ENCODE measurements at regions of chr22 and their contacts with region 1.

Region 1: GRCh38 chr22:43346521-43346929 is 3.4 kb upstream of the SCUBE1 start:
- DNase-seq: peak; percentile 37 to 65
- ATAC-seq: peak; percentile 59 to 87; a peak in 4 of 6 replicates
- H3K4me3 ChIP-seq: no peak overlapping the region
- H3K27ac ChIP-seq: no peak overlapping the region
- H3K4me1 ChIP-seq: peaks cover 11% of the 10 kb centered on the region
- CTCF ChIP-seq: peak; percentile 48
- EP300 ChIP-seq: no peak
- POLR2A ChIP-seq: no peak
- RAD21 ChIP-seq: peak; percentile 51 to 65; a peak in 4 of 5 replicates

Region 2: GRCh38 chr22:43230971-43231723 is 115.4 kb before region 1 on chr22:
- CTCF ChIA-PET with region 1: interaction called, 12 read pairs
- POLR2A ChIA-PET with region 1: no interaction called
- DNase-seq: peak; percentile 45 to 60
- ATAC-seq: peak; percentile 52 to 77; a peak in 3 of 6 replicates
- H3K4me3 ChIP-seq: no peak overlapping the region
- H3K27ac ChIP-seq: no peak overlapping the region
- H3K4me1 ChIP-seq: no peaks in the 10 kb centered on the region
- CTCF ChIP-seq: peak; percentile 69
- EP300 ChIP-seq: no peak
- POLR2A ChIP-seq: no peak
- RAD21 ChIP-seq: peak; percentile 72 to 87

Region 3: DNA sequence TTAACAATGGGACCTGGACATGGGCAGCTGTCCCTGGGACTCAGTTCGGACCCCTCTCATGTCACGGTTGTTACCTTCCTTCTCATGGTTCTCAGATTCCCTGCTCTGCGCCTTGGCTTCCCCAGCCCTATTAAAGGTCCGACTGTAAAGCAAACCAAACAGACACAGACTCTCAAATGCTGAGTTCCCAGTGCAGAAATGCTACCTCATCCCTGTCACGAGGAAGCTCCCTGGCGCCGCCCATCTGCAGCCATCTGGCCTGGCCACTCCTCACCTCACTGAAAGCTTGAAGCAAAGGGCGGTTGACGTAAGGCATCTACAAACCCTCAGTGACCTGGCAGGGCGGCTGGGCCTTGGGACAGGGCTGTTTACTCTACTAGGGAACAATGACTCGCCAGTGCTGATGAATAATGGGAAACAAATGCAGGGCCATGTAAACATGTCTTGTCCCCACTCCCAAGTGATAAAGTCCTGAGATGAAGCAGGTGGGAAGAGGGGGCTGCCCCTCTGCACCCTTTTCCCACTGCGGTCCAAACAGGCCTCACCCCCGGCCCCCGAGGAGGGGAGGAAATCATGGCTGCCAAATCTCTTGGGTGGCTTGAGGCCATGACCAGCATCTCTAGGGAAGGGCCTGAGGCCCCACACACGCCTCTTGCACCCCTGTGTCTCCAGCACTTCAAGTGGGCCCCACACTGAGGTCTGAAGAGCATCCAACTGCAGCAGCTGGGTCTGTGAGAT is 52.7 kb before region 1 on chr22:
- CTCF ChIA-PET with region 1: interaction called, 13 read pairs
- POLR2A ChIA-PET with region 1: no interaction called
- DNase-seq: peak; percentile 32 to 73
- ATAC-seq: peak; percentile 48 to 82; a peak in 5 of 6 replicates
- H3K4me3 ChIP-seq: no peak overlapping the region
- H3K27ac ChIP-seq: peak overlapping the region; percentile 45 to 52; a peak in 4 of 6 replicates
- H3K4me1 ChIP-seq: peaks cover 15% of the 10 kb centered on the region
- CTCF ChIP-seq: no peak
- EP300 ChIP-seq: no peak
- POLR2A ChIP-seq: no peak
- RAD21 ChIP-seq: no peak

Region 4: DNA sequence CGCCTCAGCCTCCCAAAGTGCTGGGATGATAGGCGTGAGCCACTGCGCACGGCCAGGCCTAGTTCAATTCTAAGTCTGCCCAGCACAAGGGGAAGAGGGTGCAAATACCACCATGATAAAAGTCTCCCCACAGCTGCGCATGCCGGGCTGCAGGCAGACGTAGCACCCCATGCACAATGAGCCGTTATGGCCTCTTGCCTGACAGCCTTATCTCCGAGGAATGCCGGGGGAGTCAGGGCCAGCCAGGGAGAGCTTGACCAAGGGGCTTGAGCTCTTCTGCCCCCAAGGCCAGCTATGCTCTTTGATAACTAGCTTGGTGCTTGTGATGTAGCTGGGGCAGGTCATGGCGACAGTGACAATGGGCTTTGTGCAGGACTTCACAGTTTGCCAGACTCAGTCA is 10.4 kb after region 1 on chr22:
- CTCF ChIA-PET with region 1: interaction called, 28 read pairs
- POLR2A ChIA-PET with region 1: no interaction called
- DNase-seq: no peak
- ATAC-seq: no peak
- H3K4me3 ChIP-seq: no peak overlapping the region
- H3K27ac ChIP-seq: no peak overlapping the region
- H3K4me1 ChIP-seq: no peaks in the 10 kb centered on the region
- CTCF ChIP-seq: no peak
- EP300 ChIP-seq: no peak
- POLR2A ChIP-seq: no peak
- RAD21 ChIP-seq: no peak

Region 5: DNA sequence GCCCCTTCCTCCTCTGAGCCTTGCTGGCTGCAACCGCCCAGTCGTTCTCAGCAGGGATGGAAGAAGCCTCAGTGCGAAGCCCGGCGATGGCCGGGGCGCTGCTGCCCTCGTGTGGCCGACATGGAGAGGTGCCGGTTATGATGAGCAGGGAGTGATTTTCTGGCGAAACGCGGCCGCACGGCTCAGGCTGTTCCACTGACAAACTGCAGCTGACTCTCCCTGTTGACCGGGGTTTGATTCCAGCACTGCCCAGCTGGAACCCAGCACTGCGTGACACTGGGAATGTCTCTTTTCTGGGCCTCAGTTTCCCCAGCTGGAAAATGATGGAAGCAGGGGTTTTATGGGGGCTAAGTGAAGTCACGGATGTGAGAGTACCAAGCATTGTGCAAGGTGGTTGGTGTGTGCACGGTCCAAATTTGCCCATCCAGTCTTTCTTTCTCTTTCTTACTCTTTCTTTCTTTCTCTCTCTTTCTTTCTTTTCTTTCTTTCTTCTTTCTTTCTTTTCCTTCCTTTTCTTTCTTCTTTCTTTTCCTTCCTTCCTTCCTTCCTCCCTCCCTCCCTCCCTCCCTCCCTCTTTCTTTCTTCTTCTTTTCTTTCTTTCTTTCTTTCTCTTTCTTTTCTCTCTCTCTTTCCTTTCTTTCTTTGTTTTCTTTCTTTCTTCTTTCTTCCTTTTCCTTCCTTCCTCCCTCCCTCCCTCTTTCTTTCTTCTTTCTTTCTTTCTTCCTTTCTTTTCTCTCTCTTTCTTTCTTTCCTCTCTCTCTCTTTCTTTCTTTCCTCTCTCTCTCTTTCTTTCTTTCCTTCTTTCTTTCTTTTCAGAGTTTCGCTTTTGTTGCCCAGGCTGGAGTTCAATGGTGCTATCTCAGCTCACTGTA is 39.5 kb after region 1 on chr22:
- CTCF ChIA-PET with region 1: interaction called, 18 read pairs
- POLR2A ChIA-PET with region 1: no interaction called
- DNase-seq: peak; percentile 69 to 72
- ATAC-seq: peak; percentile 91 to 95
- H3K4me3 ChIP-seq: no peak overlapping the region
- H3K27ac ChIP-seq: no peak overlapping the region
- H3K4me1 ChIP-seq: no peaks in the 10 kb centered on the region
- CTCF ChIP-seq: peak; percentile 75
- EP300 ChIP-seq: no peak
- POLR2A ChIP-seq: no peak
- RAD21 ChIP-seq: peak; percentile 88 to 89

Measured in A549 (cell line).